Activated CD4-positive, alpha-beta memory T cell treated with anti-CD3 and anti-CD28 coated beads for 36 hours (primary cell): ENCODE measurements at regions of chr11 and their contacts with region 1.

Region 1: GRCh38 chr11:36564376-36565030 is 3.3 kb upstream of the RAG1 start:
- DNase-seq: peak; percentile 57
- H3K4me3 Mint-ChIP-seq: peak overlapping the region; percentile 12
- H3K27ac Mint-ChIP-seq: no peak overlapping the region
- H3K4me1 Mint-ChIP-seq: peaks cover 11% of the 10 kb centered on the region
- H3K27me3 Mint-ChIP-seq: peaks cover 25% of the 10 kb centered on the region

Region 2: DNA sequence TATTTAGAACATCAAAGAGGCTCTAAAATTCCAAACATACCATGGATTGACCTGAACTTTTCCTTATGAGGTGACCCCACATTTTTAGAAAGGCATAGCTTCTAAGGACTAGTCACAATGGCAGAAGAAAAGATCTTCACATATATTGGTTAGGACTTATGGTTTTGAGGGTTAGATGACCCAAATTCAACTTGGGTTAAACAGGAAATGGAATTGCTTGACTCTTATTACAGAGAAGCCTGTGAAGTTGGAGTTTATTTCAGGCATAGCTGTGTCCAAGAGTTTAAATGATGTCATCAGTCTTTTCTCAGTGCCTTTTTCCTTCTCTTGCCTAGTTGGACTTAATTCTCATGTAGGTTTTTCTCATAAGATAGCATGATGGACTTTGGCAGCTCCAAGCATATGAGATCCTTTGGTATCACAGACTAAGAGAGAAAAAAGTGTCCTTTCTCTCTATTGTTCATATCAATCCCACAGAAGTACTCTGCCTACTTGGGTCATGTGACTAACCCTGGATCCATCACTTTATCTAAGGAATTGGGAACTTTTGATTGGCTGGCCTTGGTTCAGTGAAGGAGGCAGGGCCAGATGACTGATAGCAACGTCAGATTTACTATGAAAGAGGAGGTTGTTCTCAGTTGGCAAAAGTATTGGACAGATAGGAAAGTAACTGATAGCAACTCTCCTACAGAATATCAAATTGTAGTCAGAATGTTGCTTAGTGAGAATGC is 14.0 kb before region 1 on chr11:
- CTCF ChIA-PET with region 1: no interaction called
- POLR2A ChIA-PET with region 1: no interaction called
- intact Hi-C with region 1: no loop called
- DNase-seq: no peak
- H3K4me3 Mint-ChIP-seq: no peak overlapping the region
- H3K27ac Mint-ChIP-seq: no peak overlapping the region
- H3K4me1 Mint-ChIP-seq: no peaks in the 10 kb centered on the region
- H3K27me3 Mint-ChIP-seq: peaks cover 10% of the 10 kb centered on the region

Region 3: GRCh38 chr11:36577859-36578258 is 13.4 kb after region 1 on chr11:
- CTCF ChIA-PET with region 1: interaction called, 41 read pairs
- POLR2A ChIA-PET with region 1: no interaction called
- intact Hi-C with region 1: no loop called
- DNase-seq: no peak
- H3K4me3 Mint-ChIP-seq: no peak overlapping the region
- H3K27ac Mint-ChIP-seq: no peak overlapping the region
- H3K4me1 Mint-ChIP-seq: no peaks in the 10 kb centered on the region
- H3K27me3 Mint-ChIP-seq: peaks cover 10% of the 10 kb centered on the region

Region 4: GRCh38 chr11:36586543-36586942 is 22.0 kb after region 1 on chr11:
- CTCF ChIA-PET with region 1: interaction called, 11 read pairs
- POLR2A ChIA-PET with region 1: no interaction called
- intact Hi-C with region 1: no loop called
- DNase-seq: no peak
- H3K4me3 Mint-ChIP-seq: no peak overlapping the region
- H3K27ac Mint-ChIP-seq: no peak overlapping the region
- H3K4me1 Mint-ChIP-seq: no peaks in the 10 kb centered on the region
- H3K27me3 Mint-ChIP-seq: peaks cover 12% of the 10 kb centered on the region

Region 5: GRCh38 chr11:36622431-36623136 is 58.1 kb after region 1 on chr11:
- CTCF ChIA-PET with region 1: interaction called, 15 read pairs
- POLR2A ChIA-PET with region 1: no interaction called
- intact Hi-C with region 1: loop called (anchors 1 kb)
- DNase-seq: no peak
- H3K4me3 Mint-ChIP-seq: no peak overlapping the region
- H3K27ac Mint-ChIP-seq: no peak overlapping the region
- H3K4me1 Mint-ChIP-seq: peaks cover 2% of the 10 kb centered on the region
- H3K27me3 Mint-ChIP-seq: peaks cover 6% of the 10 kb centered on the region

Region 6: GRCh38 chr11:36672813-36673450 is 108.4 kb after region 1 on chr11:
- CTCF ChIA-PET with region 1: interaction called, 84 read pairs
- POLR2A ChIA-PET with region 1: no interaction called
- intact Hi-C with region 1: loop called (anchors 1 kb)
- DNase-seq: no peak
- H3K4me3 Mint-ChIP-seq: no peak overlapping the region
- H3K27ac Mint-ChIP-seq: no peak overlapping the region
- H3K4me1 Mint-ChIP-seq: no peaks in the 10 kb centered on the region
- H3K27me3 Mint-ChIP-seq: peaks cover 15% of the 10 kb centered on the region

Region 7: DNA sequence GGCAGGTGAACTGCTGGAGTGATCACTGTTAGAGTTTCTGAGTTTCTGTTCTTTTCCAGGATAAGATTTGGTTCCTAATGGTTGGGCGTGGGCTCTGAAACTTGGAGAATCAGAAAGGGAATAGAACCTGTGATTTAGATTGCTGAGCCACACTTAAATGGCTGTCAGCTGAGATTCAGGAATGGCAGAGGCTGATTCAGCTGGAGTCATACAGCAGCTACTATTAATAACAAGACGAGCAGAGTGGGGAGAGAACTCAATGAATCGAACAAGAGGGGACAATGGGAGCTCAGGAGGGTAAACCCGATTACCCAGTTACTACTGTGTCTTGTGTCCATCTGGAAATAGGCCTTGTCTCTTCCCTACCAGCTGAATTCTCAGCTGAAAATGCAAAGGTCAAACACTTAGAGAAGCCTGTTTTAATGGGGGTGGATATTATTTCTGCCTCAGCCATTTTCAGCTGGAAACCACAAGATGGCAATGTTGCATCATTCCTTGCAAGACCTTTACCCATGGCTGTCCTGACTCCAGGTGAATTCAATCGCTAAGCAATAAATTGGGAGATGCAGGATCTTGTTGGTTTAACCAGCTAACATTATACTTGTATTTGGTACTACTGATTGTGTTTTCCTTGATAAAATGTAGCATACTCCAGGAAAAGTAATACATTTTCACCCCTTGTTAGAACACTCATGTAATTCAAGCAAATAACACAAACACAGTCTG is 138.0 kb after region 1 on chr11:
- CTCF ChIA-PET with region 1: interaction called, 26 read pairs
- POLR2A ChIA-PET with region 1: no interaction called
- intact Hi-C with region 1: no loop called
- DNase-seq: no peak
- H3K4me3 Mint-ChIP-seq: no peak overlapping the region
- H3K27ac Mint-ChIP-seq: no peak overlapping the region
- H3K4me1 Mint-ChIP-seq: peaks cover 5% of the 10 kb centered on the region
- H3K27me3 Mint-ChIP-seq: peaks cover 18% of the 10 kb centered on the region

Region 8: GRCh38 chr11:36711106-36711825 is 146.8 kb after region 1 on chr11:
- CTCF ChIA-PET with region 1: interaction called, 10 read pairs
- POLR2A ChIA-PET with region 1: no interaction called
- intact Hi-C with region 1: no loop called
- DNase-seq: no peak
- H3K4me3 Mint-ChIP-seq: no peak overlapping the region
- H3K27ac Mint-ChIP-seq: no peak overlapping the region
- H3K4me1 Mint-ChIP-seq: no peaks in the 10 kb centered on the region
- H3K27me3 Mint-ChIP-seq: peaks cover 22% of the 10 kb centered on the region